Left lung (tissue), 14 donors: ENCODE measurements at regions of chr7 and their contacts with region 1.

Region 1: DNA sequence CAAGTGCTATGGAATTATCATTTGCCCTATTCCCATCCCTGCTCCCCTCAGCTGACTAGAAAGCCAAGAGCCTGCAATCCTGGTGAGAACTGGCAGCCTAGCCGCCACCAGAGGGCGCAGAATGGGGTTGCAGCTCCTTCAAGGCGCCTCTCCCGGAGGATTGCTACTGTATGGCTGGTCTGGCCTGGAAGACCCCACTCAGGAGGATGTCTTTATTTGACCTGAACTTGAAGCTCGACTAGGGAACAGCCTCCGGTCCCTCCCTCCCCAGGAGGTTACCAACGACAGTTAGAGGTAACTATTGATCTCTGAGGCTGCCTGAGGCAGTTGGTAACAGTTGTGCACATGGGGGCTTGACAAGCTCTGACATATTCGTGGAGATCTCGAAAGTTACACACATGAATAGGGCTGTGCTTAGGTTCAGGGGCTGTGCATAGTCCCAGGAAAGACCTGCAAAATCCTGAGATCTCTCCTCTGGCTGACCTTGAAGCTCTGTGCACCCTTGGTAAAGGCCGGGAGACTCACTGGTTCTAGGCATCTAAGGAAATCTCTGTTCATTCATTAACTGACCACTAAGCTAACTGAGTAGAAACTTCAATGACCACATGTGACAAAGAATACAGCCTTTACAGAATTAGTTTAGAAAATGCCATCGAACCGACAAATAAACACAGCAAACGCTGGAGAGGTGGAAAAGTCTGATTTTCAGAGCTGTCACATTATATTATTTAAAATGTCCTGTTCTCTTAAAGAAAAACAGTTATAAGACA is 65.7 kb downstream of the TSPAN12 start:
- DNase-seq: peak; percentile 57 to 89 (median 76)
- ATAC-seq: peak; percentile 97
- H3K4me3 ChIP-seq: no peak overlapping the region
- H3K27ac ChIP-seq: no peak overlapping the region
- H3K4me1 ChIP-seq: peaks cover 0 to 8% of the 10 kb centered on the region in 2 donors
- H3K27me3 ChIP-seq: no peaks in the 10 kb centered on the region
- CTCF ChIP-seq: peak; percentile 83 to 85

Region 2: GRCh38 chr7:120857588-120858573 is 65.6 kb after region 1 on chr7 and contains the start of gene TSPAN12:
- intact Hi-C with region 1: loop called in 1 of 2 experiments (anchors 10 kb)
- DNase-seq: peak; percentile 81 to 93 (median 90)
- ATAC-seq: peak; percentile 94
- H3K4me3 ChIP-seq: peak within 1 kb of the TSS; percentile 58 to 63
- H3K27ac ChIP-seq: peak within 1 kb of the TSS; percentile 90 to 94
- H3K4me1 ChIP-seq: peaks cover 7 to 11% of the 10 kb centered on the region in 2 donors
- H3K27me3 ChIP-seq: peaks cover 4 to 59% of the 10 kb centered on the region in 2 donors
- CTCF ChIP-seq: peak; percentile 65 to 72
- polyA plus RNA-seq, gene TSPAN12: 36.9 to 52.3 (median 44.0) TPM

Region 3: GRCh38 chr7:120877701-120878100 is 85.4 kb after region 1 on chr7:
- intact Hi-C with region 1: no loop called
- DNase-seq: no peak
- ATAC-seq: no peak
- H3K4me3 ChIP-seq: no peak overlapping the region
- H3K27ac ChIP-seq: no peak overlapping the region
- H3K4me1 ChIP-seq: peaks cover 0 to 3% of the 10 kb centered on the region in 2 donors
- H3K27me3 ChIP-seq: no peaks in the 10 kb centered on the region
- CTCF ChIP-seq: no peak

Region 4: DNA sequence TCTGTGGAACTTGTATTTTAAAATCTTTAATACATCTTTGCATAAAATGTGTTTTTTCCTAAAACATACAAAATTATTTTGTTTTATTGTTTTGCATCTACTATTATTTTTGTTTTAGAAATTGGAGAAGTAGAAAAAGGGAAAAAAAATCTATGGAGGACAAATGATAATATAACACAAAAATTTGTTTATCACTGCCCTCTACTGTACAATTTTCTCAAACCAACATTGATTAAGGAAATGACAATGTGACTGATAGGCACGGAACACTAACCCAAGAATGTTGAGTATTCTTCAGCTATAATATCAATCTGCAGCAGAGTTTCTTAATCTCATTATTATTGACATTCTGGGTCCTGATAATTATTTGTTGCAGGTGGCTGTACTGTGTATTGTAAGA is 148.8 kb after region 1 on chr7:
- intact Hi-C with region 1: loop called in 1 of 2 experiments (anchors 10 kb)
- DNase-seq: no peak
- ATAC-seq: peak; percentile 76
- H3K4me3 ChIP-seq: no peak overlapping the region
- H3K27ac ChIP-seq: no peak overlapping the region
- H3K4me1 ChIP-seq: no peaks in the 10 kb centered on the region
- H3K27me3 ChIP-seq: no peaks in the 10 kb centered on the region
- CTCF ChIP-seq: peak in 1 of 2 donors; percentile 22